ENCODE measurements at regions of chr2 and their contacts with region 1.

Region 1: GRCh38 chr2:100262555-100263320 is 59.6 kb downstream of the LONRF2 start:
- DNase-seq: peak; percentile 57
- H3K4me3 ChIP-seq: no peak overlapping the region
- H3K27ac ChIP-seq: no peak overlapping the region
- H3K4me1 ChIP-seq: no peaks in the 10 kb centered on the region
- H3K27me3 ChIP-seq: no peaks in the 10 kb centered on the region
- CTCF ChIP-seq: peak; percentile 68 to 98 (median 90)
- EP300 ChIP-seq: no peak
- POLR2A ChIP-seq: no peak

Region 2: GRCh38 chr2:99337113-99338028 is 925.4 kb before region 1 on chr2 and contains the start of gene EIF5B:
- in situ Hi-C with region 1: loop called in 1 of 4 experiments (anchors 25 kb)
- intact Hi-C with region 1: no loop called
- DNase-seq: peak; percentile 97
- H3K4me3 ChIP-seq: peak within 1 kb of the TSS; percentile 91 to 98 (median 93)
- H3K27ac ChIP-seq: peak within 1 kb of the TSS; percentile 93 to 97 (median 94)
- H3K4me1 ChIP-seq: peaks cover 16 to 47% (median 30%) of the 10 kb centered on the region in 4 donors
- H3K27me3 ChIP-seq: no peaks in the 10 kb centered on the region
- CTCF ChIP-seq: peak in 4 of 5 experiments; percentile 42 to 58 (median 54)
- EP300 ChIP-seq: no peak
- POLR2A ChIP-seq: peak; percentile 74
- total RNA-seq, gene EIF5B: 13.1 to 32.6 (median 20.6) TPM

Region 3: DNA sequence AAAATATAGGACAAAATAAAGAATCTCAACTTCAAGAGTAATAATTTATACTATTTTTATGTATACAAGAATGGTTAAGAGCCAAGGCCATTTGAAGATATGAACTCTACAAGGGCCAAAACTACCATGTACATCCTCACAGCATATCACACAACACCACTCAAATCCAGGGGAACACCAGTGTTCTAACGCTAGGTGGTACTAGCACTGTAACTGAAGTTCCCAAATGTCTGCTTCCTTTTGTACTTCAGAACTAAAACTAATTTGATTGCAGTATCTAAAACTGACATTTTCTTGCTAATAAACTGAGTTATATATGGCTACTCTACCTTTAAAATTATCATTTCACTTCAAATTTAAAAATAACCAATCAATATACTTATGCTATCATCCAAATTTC is 819.9 kb before region 1 on chr2:
- in situ Hi-C with region 1: no loop called
- intact Hi-C with region 1: loop called (anchors 10 kb)
- DNase-seq: no peak
- H3K4me3 ChIP-seq: no peak overlapping the region
- H3K27ac ChIP-seq: no peak overlapping the region
- H3K4me1 ChIP-seq: no peaks in the 10 kb centered on the region
- H3K27me3 ChIP-seq: no peaks in the 10 kb centered on the region
- CTCF ChIP-seq: no peak
- EP300 ChIP-seq: no peak
- POLR2A ChIP-seq: no peak

Region 4: DNA sequence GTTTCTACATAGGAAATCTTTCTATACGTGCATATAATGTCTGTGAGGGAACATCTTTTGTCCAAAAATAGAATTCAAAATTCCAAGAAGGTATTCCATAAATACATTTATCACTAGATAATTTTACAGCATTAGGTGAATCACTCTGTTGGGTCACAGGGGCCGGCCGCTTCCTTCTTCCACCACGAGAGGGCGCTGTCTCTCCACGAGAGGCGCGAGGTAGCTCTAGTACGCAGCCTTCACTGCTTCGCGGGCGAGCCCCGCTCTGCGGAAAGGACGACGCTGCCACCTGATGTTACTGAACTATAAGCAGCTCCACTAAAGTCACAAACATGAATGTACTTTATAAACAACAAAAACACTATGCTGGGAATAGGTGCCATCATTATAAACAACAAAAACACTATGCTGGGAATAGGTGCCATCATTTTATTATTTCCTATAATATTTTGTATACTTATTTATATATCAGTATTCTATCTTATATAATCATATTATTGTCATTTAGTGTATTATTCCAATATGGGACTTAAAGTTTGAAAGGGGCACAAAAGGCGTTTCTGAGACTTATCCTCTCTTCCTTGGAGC is 703.6 kb before region 1 on chr2:
- in situ Hi-C with region 1: loop called in 3 of 4 experiments (anchors 10 to 25 kb)
- intact Hi-C with region 1: loop called (anchors 1 kb)
- DNase-seq: peak; percentile 85
- H3K4me3 ChIP-seq: no peak overlapping the region
- H3K27ac ChIP-seq: no peak overlapping the region
- H3K4me1 ChIP-seq: no peaks in the 10 kb centered on the region
- H3K27me3 ChIP-seq: no peaks in the 10 kb centered on the region
- CTCF ChIP-seq: peak; percentile 94 to 99 (median 98)
- EP300 ChIP-seq: no peak
- POLR2A ChIP-seq: no peak

Region 5: DNA sequence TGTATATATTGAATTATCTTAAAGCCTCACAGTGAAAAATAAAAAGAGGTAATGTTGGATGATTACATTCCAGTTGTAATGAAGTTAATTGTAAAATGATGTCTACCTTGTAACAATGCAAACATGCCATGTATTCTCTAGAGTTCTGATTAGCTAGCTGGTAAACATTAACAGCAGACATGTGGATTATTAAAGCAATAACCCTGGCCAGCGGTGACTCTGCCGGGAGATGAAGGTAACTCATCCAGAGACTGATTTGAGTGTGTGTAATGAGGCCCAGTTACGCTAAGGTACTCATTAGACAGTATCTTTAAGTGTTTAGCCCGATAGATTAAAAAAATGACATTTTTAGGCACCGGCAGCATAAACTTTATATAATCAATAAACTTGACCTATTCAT is 693.4 kb before region 1 on chr2:
- in situ Hi-C with region 1: loop called in 2 of 4 experiments (anchors 10 to 25 kb)
- intact Hi-C with region 1: no loop called
- DNase-seq: no peak
- H3K4me3 ChIP-seq: no peak overlapping the region
- H3K27ac ChIP-seq: no peak overlapping the region
- H3K4me1 ChIP-seq: no peaks in the 10 kb centered on the region
- H3K27me3 ChIP-seq: no peaks in the 10 kb centered on the region
- CTCF ChIP-seq: no peak
- EP300 ChIP-seq: no peak
- POLR2A ChIP-seq: no peak

Region 6: GRCh38 chr2:100381240-100381639 is 118.5 kb after region 1 on chr2:
- in situ Hi-C with region 1: loop called in 3 of 4 experiments (anchors 10 kb)
- intact Hi-C with region 1: loop called (anchors 1 kb)
- DNase-seq: peak; percentile 73
- H3K4me3 ChIP-seq: no peak overlapping the region
- H3K27ac ChIP-seq: no peak overlapping the region
- H3K4me1 ChIP-seq: no peaks in the 10 kb centered on the region
- H3K27me3 ChIP-seq: no peaks in the 10 kb centered on the region
- CTCF ChIP-seq: peak; percentile 62 to 85 (median 78)
- EP300 ChIP-seq: no peak
- POLR2A ChIP-seq: no peak

Region 7: DNA sequence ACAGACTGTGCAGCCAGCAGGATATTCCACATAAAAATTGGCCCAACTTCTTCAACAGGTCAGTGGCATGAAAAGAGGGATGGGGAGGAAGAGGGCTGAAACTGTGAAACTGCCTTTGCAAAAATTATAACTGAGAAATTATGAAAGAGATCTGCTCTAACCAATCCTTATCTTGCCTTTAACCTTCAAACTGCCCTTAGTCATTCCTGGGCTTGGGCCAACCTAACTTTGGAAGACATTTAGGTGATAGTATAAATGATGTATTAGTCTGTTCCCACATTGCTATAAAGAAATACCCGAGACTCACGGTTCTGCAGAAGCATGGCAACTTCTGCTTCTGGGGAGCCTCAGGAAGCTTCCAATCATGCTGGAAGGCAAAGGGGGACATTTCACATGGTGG is 813.8 kb after region 1 on chr2:
- in situ Hi-C with region 1: no loop called
- intact Hi-C with region 1: no loop called
- DNase-seq: no peak
- H3K4me3 ChIP-seq: no peak overlapping the region
- H3K27ac ChIP-seq: no peak overlapping the region
- H3K4me1 ChIP-seq: peaks cover 0 to 11% (median 5%) of the 10 kb centered on the region in 4 donors
- H3K27me3 ChIP-seq: no peaks in the 10 kb centered on the region
- CTCF ChIP-seq: no peak
- EP300 ChIP-seq: no peak
- POLR2A ChIP-seq: no peak